ENCODE measurements at regions of chr6 and their contacts with region 1.

Region 1: DNA sequence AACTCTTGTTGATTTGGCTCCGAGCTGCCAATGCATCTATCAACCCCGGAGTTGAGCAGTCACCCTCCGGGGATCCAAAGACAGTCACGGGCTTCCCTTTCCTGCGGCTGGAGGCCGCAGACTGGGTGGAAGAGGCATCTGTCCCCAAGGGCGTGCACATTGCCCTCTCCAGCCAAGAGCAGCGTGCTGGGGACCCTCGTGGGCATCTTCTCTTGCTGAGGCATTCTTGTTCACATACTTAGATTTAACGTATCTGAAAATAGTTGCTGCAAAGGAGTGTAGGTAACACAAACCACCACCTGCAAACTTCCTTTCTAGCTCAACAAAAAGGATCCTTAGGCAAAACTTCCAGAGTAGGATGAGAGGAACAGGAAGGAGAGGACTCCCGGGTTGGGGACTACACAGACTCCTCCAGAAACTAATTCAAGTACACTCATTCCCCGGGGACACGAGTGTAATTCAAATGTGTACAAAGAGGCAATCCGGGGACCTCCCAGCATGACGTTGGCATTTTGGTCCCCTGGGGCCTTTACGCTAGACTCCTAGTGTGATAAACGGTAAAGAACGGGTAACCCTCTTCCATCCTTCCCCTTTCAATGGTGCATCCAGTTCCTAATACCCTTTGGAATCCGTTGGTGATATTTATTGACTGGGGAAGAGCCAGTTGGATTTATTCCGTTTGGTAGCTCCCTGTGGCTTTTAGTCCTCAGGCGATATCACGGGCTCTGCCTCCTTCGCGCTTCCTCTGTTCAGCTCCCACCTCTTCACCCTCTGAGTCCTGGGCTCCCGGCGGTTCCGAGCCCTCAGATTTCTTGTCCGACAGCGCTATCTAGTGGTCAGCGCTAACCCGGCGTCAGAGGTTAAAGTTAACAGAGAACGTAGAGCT is 2.7 kb upstream of the COL12A1 start:
- DNase-seq: peak; percentile 81 to 87 (median 85)
- ATAC-seq: peak; percentile 62 to 82 (median 70)
- H3K4me3 ChIP-seq: peak overlapping the region in 10 of 12 donors; percentile 17 to 53 (median 36)
- H3K27ac ChIP-seq: peak overlapping the region in 8 of 12 donors; percentile 31 to 80 (median 56)
- H3K4me1 ChIP-seq: peaks cover 0 to 64% (median 33%) of the 10 kb centered on the region in 12 donors
- H3K27me3 ChIP-seq: peaks cover 2 to 50% (median 25%) of the 10 kb centered on the region in 9 donors
- CTCF ChIP-seq: peak; percentile 78 to 95 (median 87)
- POLR2A ChIP-seq: no peak

Region 2: GRCh38 chr6:73675466-73676098 is 1533.0 kb before region 1 on chr6:
- intact Hi-C with region 1: loop called in 9 of 10 experiments (anchors 2 to 10 kb)
- DNase-seq: peak; percentile 68 to 77 (median 72)
- ATAC-seq: peak; percentile 69 to 91 (median 88)
- H3K4me3 ChIP-seq: no peak overlapping the region
- H3K27ac ChIP-seq: no peak overlapping the region
- H3K4me1 ChIP-seq: peaks cover 0 to 11% (median 0%) of the 10 kb centered on the region in 12 donors
- H3K27me3 ChIP-seq: no peaks in the 10 kb centered on the region
- CTCF ChIP-seq: peak; percentile 86 to 96 (median 91)
- POLR2A ChIP-seq: no peak

Region 3: DNA sequence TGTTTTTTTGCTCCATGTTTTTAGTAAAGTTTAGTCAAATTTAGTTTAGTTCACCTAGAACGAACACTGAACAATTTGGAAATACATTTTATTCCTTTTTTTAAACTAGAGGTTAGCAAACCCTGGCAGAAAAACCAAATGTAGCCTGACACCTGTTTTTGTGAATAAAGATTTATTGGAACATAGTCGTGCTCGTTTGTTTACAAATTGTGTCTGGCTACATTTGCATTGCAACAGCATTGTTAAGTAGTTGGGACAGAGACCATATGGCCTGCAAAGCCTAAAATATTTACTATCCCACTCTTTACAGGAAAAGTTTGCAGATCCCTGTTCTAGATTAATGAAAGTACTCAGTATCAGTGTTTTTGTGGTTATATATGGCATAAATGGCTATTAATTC is 1455.6 kb before region 1 on chr6:
- intact Hi-C with region 1: loop called in 1 of 10 experiments (anchors 5 kb)
- DNase-seq: no peak
- ATAC-seq: no peak
- H3K4me3 ChIP-seq: no peak overlapping the region
- H3K27ac ChIP-seq: peak overlapping the region in 1 of 12 donors; percentile 48
- H3K4me1 ChIP-seq: no peaks in the 10 kb centered on the region
- H3K27me3 ChIP-seq: no peaks in the 10 kb centered on the region
- CTCF ChIP-seq: no peak
- POLR2A ChIP-seq: no peak

Region 4: GRCh38 chr6:74091136-74091793 is 1117.3 kb before region 1 on chr6:
- intact Hi-C with region 1: loop called (anchors 5 to 10 kb)
- DNase-seq: no peak
- ATAC-seq: peak in 3 of 4 donors; percentile 37 to 39 (median 39)
- H3K4me3 ChIP-seq: no peak overlapping the region
- H3K27ac ChIP-seq: peak overlapping the region in 4 of 12 donors; percentile 5 to 49 (median 8)
- H3K4me1 ChIP-seq: peaks cover 0 to 7% (median 0%) of the 10 kb centered on the region in 12 donors
- H3K27me3 ChIP-seq: no peaks in the 10 kb centered on the region
- CTCF ChIP-seq: peak; percentile 54 to 80 (median 68)
- POLR2A ChIP-seq: no peak

Region 5: DNA sequence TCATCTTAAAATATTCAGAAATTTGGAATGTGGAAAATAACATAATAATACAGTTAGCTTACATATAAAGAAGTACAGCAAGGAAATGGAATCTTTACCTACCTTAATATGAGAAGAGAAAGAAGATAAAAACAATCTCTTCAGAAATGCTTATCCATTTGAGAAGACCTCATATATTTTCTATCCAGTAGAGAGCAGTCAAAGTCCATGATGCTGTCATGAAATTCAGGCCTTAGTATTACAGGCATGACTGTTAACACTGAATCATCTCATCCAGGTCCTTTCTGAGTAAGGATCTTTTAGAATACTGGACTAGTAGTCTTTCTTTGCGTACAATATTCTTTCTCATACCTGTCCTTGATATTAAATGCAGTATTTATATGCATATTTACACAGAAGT is 799.1 kb before region 1 on chr6:
- intact Hi-C with region 1: loop called in 7 of 10 experiments (anchors 5 to 10 kb)
- DNase-seq: no peak
- ATAC-seq: peak in 2 of 4 donors; percentile 62 to 67
- H3K4me3 ChIP-seq: no peak overlapping the region
- H3K27ac ChIP-seq: no peak overlapping the region
- H3K4me1 ChIP-seq: no peaks in the 10 kb centered on the region
- H3K27me3 ChIP-seq: no peaks in the 10 kb centered on the region
- CTCF ChIP-seq: peak in 9 of 12 donors; percentile 20 to 57 (median 33)
- POLR2A ChIP-seq: no peak

Region 6: DNA sequence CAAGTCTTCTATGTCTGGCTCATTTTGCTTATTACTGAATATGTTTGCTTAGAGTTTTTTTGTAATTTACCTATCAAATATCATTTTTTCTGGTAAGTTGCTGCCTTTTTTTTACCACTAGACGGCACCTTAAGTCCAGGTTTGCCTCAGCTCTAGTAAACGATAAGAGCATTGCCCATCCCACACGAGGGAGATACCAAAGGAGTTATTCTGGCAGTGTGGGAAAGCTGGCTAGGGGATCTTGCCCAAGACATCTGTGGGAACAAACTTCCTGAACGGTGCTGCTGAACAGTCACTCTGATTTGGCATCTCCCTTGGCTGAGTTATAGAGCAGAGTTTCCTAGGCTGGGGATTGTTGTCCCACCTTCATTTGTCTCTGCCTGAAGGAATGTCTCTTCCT is 309.1 kb before region 1 on chr6:
- intact Hi-C with region 1: loop called in 1 of 10 experiments (anchors 10 kb)
- DNase-seq: no peak
- ATAC-seq: no peak
- H3K4me3 ChIP-seq: no peak overlapping the region
- H3K27ac ChIP-seq: no peak overlapping the region
- H3K4me1 ChIP-seq: no peaks in the 10 kb centered on the region
- H3K27me3 ChIP-seq: no peaks in the 10 kb centered on the region
- CTCF ChIP-seq: no peak
- POLR2A ChIP-seq: no peak

Region 7: DNA sequence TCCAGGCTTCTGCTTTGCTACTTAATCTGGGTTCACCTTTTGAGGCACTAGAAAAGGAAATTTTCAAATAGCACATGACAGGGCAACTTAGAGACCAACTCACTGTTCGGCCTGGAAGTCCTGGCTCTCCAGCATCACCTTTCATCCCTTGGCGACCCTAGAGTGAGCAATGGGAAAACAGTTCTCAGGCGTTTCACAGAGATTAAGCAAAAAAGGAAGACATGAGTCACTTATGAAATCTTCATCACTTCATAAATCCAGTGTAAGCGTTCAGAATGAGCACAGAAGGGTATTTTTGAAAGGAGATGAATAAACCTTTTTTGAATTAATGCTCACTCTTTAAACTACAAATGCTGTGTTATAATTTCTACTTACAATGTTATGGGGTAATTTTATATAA is 106.6 kb before region 1 on chr6:
- intact Hi-C with region 1: no loop called
- DNase-seq: no peak
- ATAC-seq: no peak
- H3K4me3 ChIP-seq: no peak overlapping the region
- H3K27ac ChIP-seq: no peak overlapping the region
- H3K4me1 ChIP-seq: peaks cover 0 to 11% (median 0%) of the 10 kb centered on the region in 12 donors
- H3K27me3 ChIP-seq: no peaks in the 10 kb centered on the region
- CTCF ChIP-seq: no peak
- POLR2A ChIP-seq: no peak